ENCODE measurements at regions of chr14 and their contacts with region 1.

Region 1: DNA sequence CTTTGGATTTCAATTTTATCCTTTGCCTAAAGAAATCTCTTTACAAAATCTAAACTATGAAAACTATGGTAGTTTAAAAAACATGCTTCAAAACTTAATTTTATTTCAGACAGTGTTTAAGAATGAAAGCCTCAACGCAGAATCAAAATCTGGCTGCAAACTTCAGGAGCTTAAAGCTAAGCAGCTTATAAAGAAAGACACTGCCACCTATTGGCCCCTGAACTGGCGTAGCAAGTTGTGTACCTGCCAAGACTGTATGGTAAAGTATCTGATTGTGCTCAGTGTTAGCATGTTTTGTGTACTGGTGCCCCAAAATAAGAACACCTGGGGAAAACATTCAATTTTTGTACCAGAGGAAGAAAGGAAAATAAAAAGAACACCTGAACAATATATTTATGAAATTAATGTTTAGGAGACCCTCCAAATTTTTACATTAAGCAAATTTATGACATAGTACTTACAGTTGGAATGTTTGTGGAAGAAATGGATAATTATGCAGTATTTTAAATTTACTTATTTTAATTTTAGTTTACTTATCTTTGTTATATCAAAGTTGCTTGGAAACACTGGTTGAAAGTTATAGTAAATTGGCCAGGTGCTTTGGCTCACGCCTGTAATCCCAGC is 12.2 kb downstream of the UBR7 start:
- DNase-seq: no peak
- ATAC-seq: peak; percentile 67
- H3K4me3 Mint-ChIP-seq: no peak overlapping the region
- H3K27ac Mint-ChIP-seq: no peak overlapping the region
- H3K4me1 Mint-ChIP-seq: no peaks in the 10 kb centered on the region
- H3K27me3 Mint-ChIP-seq: no peaks in the 10 kb centered on the region
- CTCF ChIP-seq: no peak

Region 2: GRCh38 chr14:93137864-93138263 is 81.4 kb before region 1 on chr14:
- CTCF ChIA-PET with region 1: no interaction called
- POLR2A ChIA-PET with region 1: no interaction called
- intact Hi-C with region 1: loop called (anchors 1 kb)
- DNase-seq: no peak
- ATAC-seq: no peak
- H3K4me3 Mint-ChIP-seq: no peak overlapping the region
- H3K27ac Mint-ChIP-seq: no peak overlapping the region
- H3K4me1 Mint-ChIP-seq: peaks cover 3% of the 10 kb centered on the region
- H3K27me3 Mint-ChIP-seq: no peaks in the 10 kb centered on the region
- CTCF ChIP-seq: no peak

Region 3: DNA sequence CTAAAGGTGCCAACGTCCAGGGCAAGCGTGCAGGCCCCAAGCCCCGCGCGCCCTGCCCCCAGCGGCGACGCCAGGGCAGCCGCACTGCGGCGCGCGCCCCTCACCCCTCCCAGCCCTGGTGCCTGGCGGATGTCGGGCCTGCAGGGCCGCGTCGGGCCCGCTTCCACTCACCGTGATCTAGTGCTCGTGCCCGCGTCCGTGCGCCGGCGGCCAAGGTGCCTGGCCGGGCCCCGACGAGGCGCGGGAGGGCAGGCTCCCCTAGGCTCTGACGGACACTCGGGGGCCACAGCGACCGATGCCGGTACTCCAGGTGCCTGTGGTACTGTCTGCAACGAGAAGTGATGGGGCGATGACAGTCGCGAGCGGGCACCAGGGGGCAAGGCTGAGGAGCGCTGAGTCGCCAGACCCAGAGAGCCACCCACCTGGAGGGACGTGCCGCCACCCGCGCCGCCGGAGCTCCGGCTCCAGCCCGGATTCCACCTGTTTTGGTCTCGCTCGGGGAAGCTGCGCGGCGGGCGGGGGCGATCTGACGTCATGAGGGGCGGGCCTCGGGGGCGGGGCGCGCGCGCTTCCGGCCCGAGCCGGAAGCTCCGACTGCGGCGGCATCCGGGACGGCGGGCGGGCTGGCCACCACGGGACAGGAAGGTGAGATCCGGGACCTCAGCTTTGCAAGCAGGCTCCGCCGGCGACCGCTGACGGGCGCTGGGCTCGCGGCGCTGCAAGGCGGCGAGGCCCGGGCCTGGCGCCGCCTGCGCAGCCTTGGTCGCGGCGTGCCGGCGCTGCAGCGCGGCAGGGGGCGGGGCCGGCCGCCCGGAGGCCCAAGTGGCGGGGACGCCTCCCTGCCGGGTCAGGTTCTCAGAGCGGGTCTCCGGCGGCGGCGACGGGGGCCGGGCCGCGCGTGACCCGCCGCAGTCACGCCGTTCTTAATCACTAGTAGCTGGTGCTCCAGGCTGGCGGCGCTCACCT is 34.5 kb before region 1 on chr14 and contains the starts of genes LYSET and MOAP1:
- CTCF ChIA-PET with region 1: interaction called, 4 read pairs
- POLR2A ChIA-PET with region 1: interaction called, 4 read pairs
- intact Hi-C with region 1: loop called (anchors 2 kb)
- DNase-seq: peak; percentile 81
- ATAC-seq: peak; percentile 83
- H3K4me3 Mint-ChIP-seq: peak within 1 kb of the TSS; percentile 92
- H3K27ac Mint-ChIP-seq: peak within 1 kb of the TSS; percentile 93
- H3K4me1 Mint-ChIP-seq: peaks cover 24% of the 10 kb centered on the region
- H3K27me3 Mint-ChIP-seq: no peaks in the 10 kb centered on the region
- CTCF ChIP-seq: no peak
- total RNA-seq, gene LYSET: 17.6 and 19.3 TPM in 2 replicates
- total RNA-seq, gene MOAP1: 21.3 and 24.4 TPM in 2 replicates

Region 4: DNA sequence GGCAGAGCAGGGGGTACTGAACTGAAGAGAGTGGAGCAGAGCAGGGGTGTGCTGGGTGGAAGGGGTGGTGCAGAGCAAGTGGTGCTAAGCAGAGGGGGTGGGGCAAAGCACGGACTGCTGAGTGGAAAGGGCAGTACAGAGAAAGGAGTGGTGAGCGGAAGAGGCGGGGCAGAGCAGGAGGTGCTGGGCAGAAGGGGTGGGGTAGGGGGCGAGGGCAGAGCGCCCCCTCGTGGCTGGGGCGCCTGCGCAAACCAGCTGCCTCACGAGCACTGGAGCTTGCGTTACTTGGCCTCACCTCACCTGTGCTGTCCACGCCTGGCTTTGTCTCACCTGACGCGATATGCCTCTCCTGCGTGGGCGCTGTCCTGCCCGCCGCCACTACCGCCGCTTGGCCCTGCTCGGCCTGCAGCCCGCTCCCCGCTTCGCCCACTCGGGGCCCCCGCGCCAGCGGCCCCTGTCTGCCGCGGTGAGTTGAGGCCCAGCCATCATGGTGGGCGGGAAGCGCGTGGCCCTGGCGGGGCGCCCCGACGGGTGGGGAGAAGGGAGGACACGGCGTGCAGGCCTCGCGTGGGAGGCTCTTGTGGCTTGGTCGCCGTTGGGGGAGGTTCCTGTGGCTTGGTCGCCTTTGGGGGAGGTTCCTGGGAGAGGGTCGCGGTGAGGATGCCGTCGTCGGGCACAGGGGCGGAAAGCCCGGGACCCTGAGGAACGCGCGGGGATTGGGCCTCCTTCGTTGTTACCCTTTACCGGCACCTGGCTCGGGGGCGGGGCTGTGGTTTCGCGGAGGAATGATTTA is 127.9 kb after region 1 on chr14 and contains the start of gene COX8C:
- CTCF ChIA-PET with region 1: no interaction called
- POLR2A ChIA-PET with region 1: no interaction called
- intact Hi-C with region 1: no loop called
- DNase-seq: no peak
- ATAC-seq: no peak
- H3K4me3 Mint-ChIP-seq: no peak within 1 kb of the TSS
- H3K27ac Mint-ChIP-seq: no peak within 1 kb of the TSS
- H3K4me1 Mint-ChIP-seq: peaks cover 7% of the 10 kb centered on the region
- H3K27me3 Mint-ChIP-seq: no peaks in the 10 kb centered on the region
- CTCF ChIP-seq: no peak
- total RNA-seq, gene COX8C: not detected in 2 replicates

Measured in activated B cell treated with CpG ODN at 0.5 μM for 24 hours (primary cell).